ENCODE measurements at regions of chr6 and their contacts with region 1.

Region 1: GRCh38 chr6:13908955-13909381 is 15.8 kb upstream of the RNF182 start:
- DNase-seq: peak; percentile 36
- H3K4me3 Mint-ChIP-seq: no peak overlapping the region
- H3K27ac Mint-ChIP-seq: no peak overlapping the region
- H3K4me1 Mint-ChIP-seq: peaks cover 12% of the 10 kb centered on the region
- H3K27me3 Mint-ChIP-seq: peaks cover 12% of the 10 kb centered on the region
- CTCF ChIP-seq: no peak

Region 2: DNA sequence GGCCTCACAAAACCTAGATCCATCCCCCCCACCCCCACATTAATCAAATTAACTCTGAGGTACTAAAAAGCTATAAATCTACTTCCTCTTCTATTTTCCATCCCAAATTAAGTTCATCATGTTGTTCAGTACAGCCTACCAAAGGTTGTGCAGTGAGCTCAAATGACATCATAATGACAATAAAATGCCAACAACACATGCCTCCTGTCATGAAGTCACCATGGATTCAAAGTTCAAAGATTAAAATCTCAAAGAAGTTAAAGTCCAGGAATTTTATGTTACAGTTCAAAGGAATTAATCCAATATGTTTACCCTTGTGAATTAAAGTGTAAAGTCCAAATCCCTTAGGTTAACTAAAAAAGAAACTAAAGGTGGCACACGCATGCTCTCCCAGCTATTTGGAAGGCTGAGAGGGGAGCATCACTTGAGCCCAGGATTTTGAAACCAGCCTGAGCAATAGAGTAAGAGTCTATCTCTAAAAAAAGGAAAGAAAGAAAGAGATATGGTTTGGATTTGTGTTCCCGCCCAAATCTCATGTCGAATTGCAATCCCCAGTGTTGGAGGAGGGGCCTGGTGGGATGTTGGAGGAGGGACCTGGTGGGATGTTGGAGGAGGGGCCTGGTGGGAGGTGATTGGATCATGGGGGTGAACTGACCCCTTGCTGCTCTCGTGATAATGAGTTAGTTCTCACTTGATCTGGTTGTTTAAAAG is 360.3 kb before region 1 on chr6:
- CTCF ChIA-PET with region 1: no interaction called
- intact Hi-C with region 1: no loop called
- DNase-seq: no peak
- H3K4me3 Mint-ChIP-seq: no peak overlapping the region
- H3K27ac Mint-ChIP-seq: no peak overlapping the region
- H3K4me1 Mint-ChIP-seq: no peaks in the 10 kb centered on the region
- H3K27me3 Mint-ChIP-seq: no peaks in the 10 kb centered on the region
- CTCF ChIP-seq: no peak

Region 3: DNA sequence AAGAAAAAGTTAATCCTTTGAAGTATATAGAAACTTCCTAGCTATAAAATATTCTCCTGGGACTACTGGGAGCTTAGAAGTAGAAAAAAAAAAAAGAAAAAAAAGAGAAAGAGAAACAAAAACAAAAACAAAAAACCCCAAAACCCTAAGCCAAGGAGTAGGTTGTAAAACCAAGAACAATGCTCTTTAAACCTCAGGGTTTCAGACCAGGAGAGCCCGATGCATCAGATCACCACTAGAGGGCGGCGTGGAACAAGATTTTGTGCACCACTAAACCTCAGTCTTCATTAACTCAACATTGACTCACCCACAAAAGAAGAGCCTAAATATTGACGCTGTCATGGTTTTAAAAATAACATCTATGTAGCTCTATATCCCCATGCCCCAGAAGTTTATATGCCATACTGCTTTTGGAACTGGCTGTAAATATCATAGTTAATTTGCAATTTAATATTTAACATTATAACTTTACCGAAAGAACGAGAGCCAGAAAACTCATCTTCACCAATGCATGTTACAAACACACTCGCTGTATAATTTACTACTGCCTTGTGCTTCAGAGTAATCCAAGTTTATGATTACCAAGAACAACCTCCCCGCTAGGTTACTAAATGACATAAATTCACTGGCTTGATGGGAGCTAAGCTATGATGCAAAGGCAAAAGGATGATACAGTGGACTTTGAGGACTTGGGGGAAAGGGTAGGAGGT is 113.8 kb before region 1 on chr6:
- CTCF ChIA-PET with region 1: no interaction called
- intact Hi-C with region 1: loop called (anchors 10 kb)
- DNase-seq: peak; percentile 72
- H3K4me3 Mint-ChIP-seq: no peak overlapping the region
- H3K27ac Mint-ChIP-seq: no peak overlapping the region
- H3K4me1 Mint-ChIP-seq: no peaks in the 10 kb centered on the region
- H3K27me3 Mint-ChIP-seq: no peaks in the 10 kb centered on the region
- CTCF ChIP-seq: peak; percentile 69

Region 4: GRCh38 chr6:14046476-14047068 is 137.6 kb after region 1 on chr6:
- CTCF ChIA-PET with region 1: interaction called, 20 read pairs
- intact Hi-C with region 1: loop called (anchors 5 kb)
- DNase-seq: peak; percentile 39
- H3K4me3 Mint-ChIP-seq: no peak overlapping the region
- H3K27ac Mint-ChIP-seq: no peak overlapping the region
- H3K4me1 Mint-ChIP-seq: no peaks in the 10 kb centered on the region
- H3K27me3 Mint-ChIP-seq: peaks cover 30% of the 10 kb centered on the region
- CTCF ChIP-seq: no peak

Region 5: GRCh38 chr6:14144678-14145113 is 235.7 kb after region 1 on chr6:
- CTCF ChIA-PET with region 1: no interaction called
- intact Hi-C with region 1: loop called (anchors 1 kb)
- DNase-seq: peak; percentile 79
- H3K4me3 Mint-ChIP-seq: no peak overlapping the region
- H3K27ac Mint-ChIP-seq: no peak overlapping the region
- H3K4me1 Mint-ChIP-seq: no peaks in the 10 kb centered on the region
- H3K27me3 Mint-ChIP-seq: no peaks in the 10 kb centered on the region
- CTCF ChIP-seq: peak; percentile 66

Measured in Calu3 (cell line).